ENCODE measurements at regions of chr15 and their contacts with region 1.

Region 1: GRCh38 chr15:47652328-47652727 is 65.0 kb upstream of the SEMA6D start:
- DNase-seq: no peak
- ATAC-seq: no peak
- H3K4me3 ChIP-seq: no peak overlapping the region
- H3K27ac ChIP-seq: no peak overlapping the region
- H3K4me1 ChIP-seq: no peaks in the 10 kb centered on the region
- H3K27me3 ChIP-seq: no peaks in the 10 kb centered on the region
- CTCF ChIP-seq: no peak
- EP300 ChIP-seq: no peak
- POLR2A ChIP-seq: no peak
- RAD21 ChIP-seq: no peak

Region 2: DNA sequence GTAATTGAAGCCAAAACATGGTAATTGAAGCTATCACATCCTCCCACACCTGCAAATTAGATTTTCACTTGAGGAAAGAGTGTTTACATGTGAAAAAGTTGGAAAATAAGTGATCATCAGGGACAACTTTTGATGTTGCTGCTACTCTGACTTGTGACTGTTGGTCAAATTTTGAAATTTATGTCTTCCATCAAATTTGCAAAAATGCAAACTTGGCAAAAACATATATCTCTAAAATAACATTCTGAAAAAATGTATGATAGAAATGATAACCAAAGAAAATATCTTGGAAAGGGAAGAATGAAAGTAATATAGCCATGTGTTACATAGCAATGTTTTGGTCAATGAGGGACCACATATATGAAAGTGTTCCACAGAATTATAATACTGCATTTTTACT is 638.9 kb before region 1 on chr15:
- CTCF ChIA-PET with region 1: no interaction called
- POLR2A ChIA-PET with region 1: no interaction called
- RAD21 ChIA-PET with region 1: no interaction called
- SMC1A ChIA-PET with region 1: no interaction called
- in situ Hi-C with region 1: no loop called
- intact Hi-C with region 1: no loop called
- DNase-seq: no peak
- ATAC-seq: no peak
- H3K4me3 ChIP-seq: no peak overlapping the region
- H3K27ac ChIP-seq: no peak overlapping the region
- H3K4me1 ChIP-seq: no peaks in the 10 kb centered on the region
- H3K27me3 ChIP-seq: no peaks in the 10 kb centered on the region
- CTCF ChIP-seq: no peak
- EP300 ChIP-seq: no peak
- POLR2A ChIP-seq: no peak
- RAD21 ChIP-seq: no peak

Region 3: GRCh38 chr15:47620965-47621685 is 31.2 kb before region 1 on chr15:
- CTCF ChIA-PET with region 1: no interaction called
- POLR2A ChIA-PET with region 1: no interaction called
- RAD21 ChIA-PET with region 1: no interaction called
- SMC1A ChIA-PET with region 1: no interaction called
- in situ Hi-C with region 1: no loop called
- intact Hi-C with region 1: no loop called
- DNase-seq: no peak
- ATAC-seq: no peak
- H3K4me3 ChIP-seq: no peak overlapping the region
- H3K27ac ChIP-seq: no peak overlapping the region
- H3K4me1 ChIP-seq: no peaks in the 10 kb centered on the region
- H3K27me3 ChIP-seq: no peaks in the 10 kb centered on the region
- CTCF ChIP-seq: no peak
- EP300 ChIP-seq: no peak
- POLR2A ChIP-seq: no peak
- RAD21 ChIP-seq: no peak

Region 4: DNA sequence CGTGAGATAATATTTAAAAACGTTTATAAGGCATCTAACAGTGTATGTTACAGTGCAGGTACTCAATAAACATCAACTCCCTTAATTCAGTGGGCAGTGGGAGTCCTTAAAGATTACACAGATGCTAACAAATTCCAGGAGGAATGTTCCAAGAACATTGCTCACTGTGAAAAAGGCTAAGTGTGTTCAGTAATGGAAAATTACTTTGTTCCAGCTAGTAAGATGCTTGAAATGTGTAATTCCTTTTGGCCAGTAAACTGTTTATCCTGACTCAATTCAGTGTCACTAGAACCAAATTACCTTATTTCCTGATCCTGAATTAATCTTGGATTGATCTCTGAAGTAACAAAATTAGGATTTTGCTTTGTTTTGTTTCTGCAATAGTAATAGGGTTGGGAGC is 10.8 kb after region 1 on chr15:
- CTCF ChIA-PET with region 1: no interaction called
- POLR2A ChIA-PET with region 1: no interaction called
- RAD21 ChIA-PET with region 1: no interaction called
- SMC1A ChIA-PET with region 1: interaction called, 3 read pairs
- in situ Hi-C with region 1: no loop called
- intact Hi-C with region 1: loop called (anchors 1 kb)
- DNase-seq: no peak
- ATAC-seq: no peak
- H3K4me3 ChIP-seq: no peak overlapping the region
- H3K27ac ChIP-seq: no peak overlapping the region
- H3K4me1 ChIP-seq: no peaks in the 10 kb centered on the region
- H3K27me3 ChIP-seq: no peaks in the 10 kb centered on the region
- CTCF ChIP-seq: no peak
- EP300 ChIP-seq: no peak
- POLR2A ChIP-seq: no peak
- RAD21 ChIP-seq: no peak